Psoas muscle (tissue), 8 donors: ENCODE measurements at regions of chr6 and their contacts with region 1.

Region 1: GRCh38 chr6:34392497-34393190 is at the start of gene NUDT3:
- DNase-seq: peak; percentile 96 to 98
- ATAC-seq: peak; percentile 86 to 90 (median 86)
- H3K4me3 ChIP-seq: peak within 1 kb of the TSS; percentile 76
- H3K27ac ChIP-seq: peak within 1 kb of the TSS; percentile 98
- H3K4me1 ChIP-seq: peaks cover 48% of the 10 kb centered on the region
- H3K27me3 ChIP-seq: no peaks in the 10 kb centered on the region
- CTCF ChIP-seq: peak; percentile 81
- total RNA-seq, gene NUDT3: 33.3 to 70.5 (median 50.6) TPM

Region 2: DNA sequence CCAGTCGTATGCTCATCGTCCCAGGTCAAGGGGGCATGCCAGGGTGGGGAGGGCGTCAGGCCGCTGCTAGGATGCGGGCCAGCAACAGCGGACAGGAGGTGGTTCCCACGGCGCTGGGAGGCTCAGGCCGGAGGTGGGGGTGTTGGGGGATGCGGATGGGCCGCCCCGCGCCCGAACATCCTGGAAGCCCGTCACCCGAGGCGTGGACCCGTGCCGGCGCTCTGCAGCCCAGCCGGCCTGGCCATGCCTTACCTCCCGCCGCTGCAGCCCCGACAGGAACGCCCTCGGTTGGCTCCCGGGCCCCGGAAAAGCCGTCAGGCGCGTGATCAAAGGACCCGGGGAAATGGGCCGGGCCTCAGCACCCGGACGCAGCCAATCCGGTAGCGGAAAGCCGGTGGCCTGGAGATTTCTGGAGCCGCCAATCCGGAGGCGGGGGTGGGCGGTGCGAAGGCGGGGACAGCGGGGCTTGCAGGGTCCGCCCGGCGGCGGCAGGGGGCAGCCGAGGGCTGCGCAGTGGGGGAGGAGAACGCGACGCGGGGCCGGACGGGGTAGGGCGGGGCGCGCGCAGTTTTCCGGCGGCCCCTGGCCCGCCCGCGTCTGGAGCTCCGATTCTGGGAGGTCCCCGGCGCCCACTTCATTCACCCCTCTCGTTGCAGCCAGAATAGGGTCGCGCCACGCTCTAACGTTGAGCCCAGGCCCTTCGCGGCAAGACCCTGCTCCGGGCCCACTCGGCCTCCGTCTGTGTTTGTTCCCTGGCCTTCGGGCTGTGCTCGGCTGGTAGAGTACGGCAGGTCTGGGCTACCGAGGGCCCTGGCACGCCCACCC is 143.7 kb before region 1 on chr6 and contains the start of gene SMIM29:
- intact Hi-C with region 1: loop called (anchors 2 kb)
- DNase-seq: peak; percentile 97 to 99
- ATAC-seq: peak; percentile 88 to 93 (median 90)
- H3K4me3 ChIP-seq: peak within 1 kb of the TSS; percentile 72
- H3K27ac ChIP-seq: peak within 1 kb of the TSS; percentile 89
- H3K4me1 ChIP-seq: peaks cover 20% of the 10 kb centered on the region
- H3K27me3 ChIP-seq: no peaks in the 10 kb centered on the region
- CTCF ChIP-seq: peak; percentile 92
- total RNA-seq, gene SMIM29: 14.4 to 59.4 (median 31.5) TPM

Region 3: GRCh38 chr6:34295721-34296120 is 96.9 kb before region 1 on chr6:
- intact Hi-C with region 1: loop called in 1 of 2 experiments (anchors 5 kb)
- DNase-seq: no peak
- ATAC-seq: peak; percentile 83 to 93 (median 88)
- H3K4me3 ChIP-seq: peak overlapping the region; percentile 30
- H3K27ac ChIP-seq: peak overlapping the region; percentile 87
- H3K4me1 ChIP-seq: peaks cover 70% of the 10 kb centered on the region
- H3K27me3 ChIP-seq: no peaks in the 10 kb centered on the region
- CTCF ChIP-seq: no peak

Region 4: DNA sequence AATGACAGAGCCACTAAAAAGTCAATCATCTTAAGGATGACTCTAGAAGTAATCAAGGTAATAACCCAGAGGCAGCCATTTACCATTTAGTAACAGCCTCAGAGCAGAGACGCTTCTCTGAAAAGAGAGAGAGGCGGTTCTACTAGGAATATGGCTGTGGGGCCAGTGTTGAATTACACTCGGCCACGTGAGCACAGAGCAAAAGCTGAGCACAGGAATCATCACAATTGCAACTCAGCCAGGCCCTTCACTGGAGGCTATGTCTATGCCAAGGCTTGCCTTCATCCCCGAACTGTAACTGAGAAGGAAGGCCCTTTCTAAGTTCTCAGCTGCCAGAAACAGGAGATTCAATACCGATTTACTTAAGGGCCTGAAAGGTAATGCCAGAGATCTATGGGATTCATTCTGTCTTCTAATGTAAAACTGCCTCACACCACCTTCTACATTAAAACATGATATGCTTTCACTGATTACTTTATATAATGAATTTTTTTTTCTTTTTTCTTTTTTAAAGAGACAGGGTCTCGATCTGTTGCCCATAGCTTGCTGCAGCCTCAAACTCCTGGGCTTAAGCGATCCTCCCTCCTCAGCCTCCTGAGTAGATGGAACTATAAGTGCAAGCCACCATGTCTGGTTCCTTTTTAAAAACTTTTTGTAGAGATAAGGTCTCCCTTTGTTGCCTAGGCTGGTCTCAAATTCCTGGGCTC is 67.8 kb before region 1 on chr6:
- intact Hi-C with region 1: loop called in 1 of 2 experiments (anchors 5 kb)
- DNase-seq: peak; percentile 62 to 81
- ATAC-seq: peak; percentile 96 to 98 (median 96)
- H3K4me3 ChIP-seq: no peak overlapping the region
- H3K27ac ChIP-seq: peak overlapping the region; percentile 86
- H3K4me1 ChIP-seq: peaks cover 22% of the 10 kb centered on the region
- H3K27me3 ChIP-seq: no peaks in the 10 kb centered on the region
- CTCF ChIP-seq: no peak